K562 (cell line): ENCODE measurements at regions of chr15 and their contacts with region 1.

Region 1: GRCh38 chr15:78315686-78316282 is 16.4 kb upstream of the SKIC8 start:
- DNase-seq: peak; percentile 40 to 58 (median 49)
- ATAC-seq: peak; percentile 86
- H3K4me3 ChIP-seq: no peak overlapping the region
- H3K27ac ChIP-seq: no peak overlapping the region
- H3K4me1 ChIP-seq: peaks cover 9 to 13% of the 10 kb centered on the region in 2 experiments; a peak in 4 of 5 replicates
- H3K27me3 ChIP-seq: no peaks in the 10 kb centered on the region
- CTCF ChIP-seq: peak; percentile 51 to 68 (median 56)
- EP300 ChIP-seq: no peak
- POLR2A ChIP-seq: no peak
- RAD21 ChIP-seq: peak in 1 of 2 experiments; percentile 43; a peak in 2 of 4 replicates

Region 2: GRCh38 chr15:78299101-78299930 is 16.5 kb before region 1 on chr15 and contains the start of gene SKIC8:
- CTCF ChIA-PET with region 1: no interaction called
- POLR2A ChIA-PET with region 1: interaction called, 12 read pairs
- in situ Hi-C with region 1: no loop called
- intact Hi-C with region 1: no loop called
- DNase-seq: peak; percentile 92 to 97 (median 94)
- ATAC-seq: peak; percentile 91
- H3K4me3 ChIP-seq: peak within 1 kb of the TSS; percentile 82
- H3K27ac ChIP-seq: peak within 1 kb of the TSS; percentile 92
- H3K4me1 ChIP-seq: peaks cover 23 to 28% of the 10 kb centered on the region in 2 experiments
- H3K27me3 ChIP-seq: no peaks in the 10 kb centered on the region
- CTCF ChIP-seq: 0 out of 6 replicates have a peak, but pooled peaks of 1 of the 3 experiments have one; percentile 9
- EP300 ChIP-seq: peak; percentile 25; the same call in 1 of the 2 replicates
- POLR2A ChIP-seq: peak; percentile 95
- RAD21 ChIP-seq: no peak
- polyA plus RNA-seq, gene SKIC8: 352 to 389 TPM

Region 3: GRCh38 chr15:78415286-78415685 is 99.5 kb after region 1 on chr15:
- CTCF ChIA-PET with region 1: no interaction called
- POLR2A ChIA-PET with region 1: no interaction called
- in situ Hi-C with region 1: loop called (anchors 5 kb)
- intact Hi-C with region 1: no loop called
- DNase-seq: peak in 2 of 4 experiments; percentile 21 to 27
- ATAC-seq: peak; percentile 74
- H3K4me3 ChIP-seq: no peak overlapping the region
- H3K27ac ChIP-seq: no peak overlapping the region
- H3K4me1 ChIP-seq: no peaks in the 10 kb centered on the region
- H3K27me3 ChIP-seq: peaks cover 5 to 30% of the 10 kb centered on the region in 2 experiments
- CTCF ChIP-seq: peak; percentile 23 to 58 (median 37); a peak in 3 of 6 replicates
- EP300 ChIP-seq: no peak
- POLR2A ChIP-seq: no peak
- RAD21 ChIP-seq: peak in 1 of 2 experiments; percentile 61; a peak in 2 of 4 replicates

Region 4: DNA sequence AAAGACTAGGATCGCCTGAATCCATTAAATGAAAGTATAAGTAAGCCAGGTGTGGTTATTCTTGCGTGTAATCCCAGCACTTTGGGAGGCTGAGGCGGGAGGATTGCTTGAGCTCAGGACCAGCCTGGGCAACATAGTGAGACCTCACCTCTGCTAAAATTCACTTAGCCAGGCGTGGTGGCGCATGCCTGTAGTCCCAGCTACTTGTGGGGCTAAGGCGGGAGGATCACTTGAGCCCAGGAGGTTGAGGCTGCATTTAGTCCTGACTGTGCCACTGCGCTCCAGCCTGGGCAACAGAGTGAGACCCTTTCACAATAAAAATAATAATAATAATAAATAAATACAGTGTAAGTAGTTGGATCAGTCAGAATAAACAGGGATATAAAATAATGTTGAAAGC is 166.1 kb after region 1 on chr15:
- CTCF ChIA-PET with region 1: no interaction called
- POLR2A ChIA-PET with region 1: no interaction called
- in situ Hi-C with region 1: loop called (anchors 10 kb)
- intact Hi-C with region 1: no loop called
- DNase-seq: no peak
- ATAC-seq: no peak
- H3K4me3 ChIP-seq: no peak overlapping the region
- H3K27ac ChIP-seq: no peak overlapping the region
- H3K4me1 ChIP-seq: no peaks in the 10 kb centered on the region
- H3K27me3 ChIP-seq: no peaks in the 10 kb centered on the region
- CTCF ChIP-seq: no peak
- EP300 ChIP-seq: no peak
- POLR2A ChIP-seq: no peak
- RAD21 ChIP-seq: no peak

Region 5: DNA sequence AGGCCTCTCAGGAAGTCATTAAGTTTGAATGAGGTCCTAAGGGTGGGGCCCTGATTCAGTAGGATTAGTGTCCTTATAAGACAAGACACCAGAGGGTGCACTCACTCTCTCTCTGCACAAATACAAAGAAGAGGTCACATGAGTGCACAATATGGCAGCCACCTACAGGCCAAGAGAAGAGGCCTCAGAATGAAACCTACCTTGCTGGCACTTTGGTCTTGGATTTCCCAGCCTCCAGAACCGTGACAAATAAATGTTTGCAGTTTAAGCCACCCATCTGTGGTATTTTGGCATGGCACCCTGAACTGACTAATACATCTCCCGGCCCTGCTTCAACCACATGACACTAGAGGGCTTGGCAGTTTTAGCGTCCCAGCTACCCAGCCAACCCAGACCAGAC is 399.1 kb after region 1 on chr15:
- CTCF ChIA-PET with region 1: no interaction called
- POLR2A ChIA-PET with region 1: no interaction called
- in situ Hi-C with region 1: loop called (anchors 10 kb)
- intact Hi-C with region 1: no loop called
- DNase-seq: peak in 1 of 4 experiments; percentile 57
- ATAC-seq: peak; percentile 90
- H3K4me3 ChIP-seq: no peak overlapping the region
- H3K27ac ChIP-seq: no peak overlapping the region
- H3K4me1 ChIP-seq: no peaks in the 10 kb centered on the region
- H3K27me3 ChIP-seq: no peaks in the 10 kb centered on the region
- CTCF ChIP-seq: peak; percentile 26 to 76 (median 61); a peak in 4 of 6 replicates
- EP300 ChIP-seq: no peak
- POLR2A ChIP-seq: no peak
- RAD21 ChIP-seq: peak in 1 of 2 experiments; percentile 52; a peak in 2 of 4 replicates